OCI-LY7 (cell line): ENCODE measurements at regions of chr17 and their contacts with region 1.

Region 1: GRCh38 chr17:12815642-12816141 is 26.4 kb downstream of the ARHGAP44 start:
- DNase-seq: peak; percentile 93
- H3K4me3 ChIP-seq: peak overlapping the region; percentile 57
- H3K27ac ChIP-seq: peak overlapping the region; percentile 95
- H3K4me1 ChIP-seq: peaks cover 50% of the 10 kb centered on the region
- CTCF ChIP-seq: no peak

Region 2: DNA sequence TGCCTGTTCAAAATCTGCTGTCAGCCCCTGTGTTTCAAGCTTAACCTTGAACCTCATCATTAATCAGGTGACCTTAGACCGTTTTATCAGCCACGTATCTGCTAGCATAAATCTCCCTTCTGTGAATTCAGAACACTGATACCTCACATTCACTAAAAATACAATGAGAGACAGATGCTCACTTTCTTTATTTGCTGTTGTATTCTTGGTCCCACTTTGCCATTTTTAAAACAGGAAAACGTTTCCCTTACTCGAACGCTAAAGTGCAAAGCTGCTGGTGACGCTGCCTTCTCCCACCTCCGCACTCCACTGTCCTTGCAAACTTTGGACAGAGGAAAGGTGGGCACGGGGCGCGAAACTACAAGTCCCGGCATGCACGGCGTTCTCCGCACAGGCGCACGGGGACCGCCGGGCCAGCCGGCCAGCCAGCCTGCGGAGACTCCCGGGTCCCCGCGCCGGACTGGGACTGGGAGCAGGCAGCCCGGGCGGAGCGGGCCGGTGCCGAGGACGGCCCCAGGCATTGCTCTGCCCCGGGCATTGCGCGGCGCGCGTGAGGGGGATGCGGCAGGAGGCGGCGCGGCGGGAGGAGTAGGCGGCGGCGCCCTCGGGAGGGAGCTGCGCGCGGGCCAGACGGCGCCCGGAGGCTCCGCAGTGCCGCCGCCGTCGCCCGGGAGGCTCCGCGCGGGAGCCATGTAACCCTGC is 26.5 kb before region 1 on chr17 and contains the start of gene ARHGAP44:
- CTCF ChIA-PET with region 1: interaction called, 3 read pairs
- POLR2A ChIA-PET with region 1: interaction called, 3 read pairs
- intact Hi-C with region 1: loop called (anchors 1 kb)
- DNase-seq: peak; percentile 72
- H3K4me3 ChIP-seq: peak within 1 kb of the TSS; percentile 93
- H3K27ac ChIP-seq: no peak within 1 kb of the TSS
- H3K4me1 ChIP-seq: peaks cover 10% of the 10 kb centered on the region
- CTCF ChIP-seq: no peak
- total RNA-seq, gene ARHGAP44: 11.1 and 13.7 TPM in 2 replicates

Region 3: GRCh38 chr17:12800855-12801365 is 14.8 kb before region 1 on chr17:
- CTCF ChIA-PET with region 1: no interaction called
- POLR2A ChIA-PET with region 1: interaction called, 14 read pairs
- intact Hi-C with region 1: no loop called
- DNase-seq: no peak
- H3K4me3 ChIP-seq: peak overlapping the region; percentile 14
- H3K27ac ChIP-seq: no peak overlapping the region
- H3K4me1 ChIP-seq: peaks cover 21% of the 10 kb centered on the region
- CTCF ChIP-seq: no peak

Region 4: GRCh38 chr17:12928741-12929140 is 113.0 kb after region 1 on chr17:
- CTCF ChIA-PET with region 1: no interaction called
- POLR2A ChIA-PET with region 1: no interaction called
- intact Hi-C with region 1: loop called (anchors 1 kb)
- DNase-seq: peak; percentile 48
- H3K4me3 ChIP-seq: no peak overlapping the region
- H3K27ac ChIP-seq: peak overlapping the region; percentile 87
- H3K4me1 ChIP-seq: peaks cover 27% of the 10 kb centered on the region
- CTCF ChIP-seq: peak; percentile 73